WTC11 (cell line): ENCODE measurements at regions of chr11 and their contacts with region 1.

Region 1: DNA sequence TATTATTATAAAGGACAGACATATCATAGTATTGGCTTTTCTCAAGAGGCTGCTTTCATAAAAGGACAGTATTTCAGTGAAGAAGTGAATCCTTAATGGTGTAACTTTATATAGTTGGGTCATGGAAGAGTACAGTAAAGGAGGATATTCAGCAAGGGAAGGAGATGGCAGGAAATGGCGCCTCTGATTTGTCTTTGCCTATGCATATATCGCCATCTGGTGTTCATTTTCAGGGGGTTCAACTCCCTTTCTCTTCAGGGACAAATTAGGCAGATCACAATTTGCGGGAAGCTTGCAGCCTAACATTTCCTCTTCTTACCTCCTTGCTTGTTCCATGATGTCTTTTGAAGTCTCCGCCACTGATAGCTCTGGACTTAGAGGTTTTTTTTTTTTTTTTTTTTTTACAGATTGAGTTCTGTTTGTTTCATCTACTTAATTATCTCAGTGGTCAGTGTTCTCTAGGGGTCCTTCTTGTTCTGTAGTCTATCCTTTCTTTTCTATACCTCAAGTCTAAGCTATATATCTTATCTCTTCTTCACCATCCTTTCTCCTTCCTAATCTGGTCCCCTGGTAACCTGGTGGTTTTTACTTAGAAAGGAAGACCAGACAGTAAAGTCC is 21.8 kb upstream of the RRM1 start:
- DNase-seq: no peak
- ATAC-seq: peak; percentile 90
- H3K4me3 Mint-ChIP-seq: no peak overlapping the region
- H3K27ac Mint-ChIP-seq: no peak overlapping the region
- H3K4me1 Mint-ChIP-seq: no peaks in the 10 kb centered on the region
- H3K27me3 Mint-ChIP-seq: peaks cover 8% of the 10 kb centered on the region; the same call in 1 of the 2 replicates
- CTCF ChIP-seq: peak; percentile 73

Region 2: GRCh38 chr11:3824714-3825472 is 247.9 kb before region 1 on chr11:
- CTCF ChIA-PET with region 1: interaction called, 19 read pairs
- POLR2A ChIA-PET with region 1: no interaction called
- DNase-seq: peak; percentile 94
- ATAC-seq: peak; percentile 92
- H3K4me3 Mint-ChIP-seq: no peak overlapping the region
- H3K27ac Mint-ChIP-seq: peak overlapping the region; percentile 26
- H3K4me1 Mint-ChIP-seq: peaks cover 41% of the 10 kb centered on the region
- H3K27me3 Mint-ChIP-seq: no peaks in the 10 kb centered on the region
- CTCF ChIP-seq: peak; percentile 87

Region 3: DNA sequence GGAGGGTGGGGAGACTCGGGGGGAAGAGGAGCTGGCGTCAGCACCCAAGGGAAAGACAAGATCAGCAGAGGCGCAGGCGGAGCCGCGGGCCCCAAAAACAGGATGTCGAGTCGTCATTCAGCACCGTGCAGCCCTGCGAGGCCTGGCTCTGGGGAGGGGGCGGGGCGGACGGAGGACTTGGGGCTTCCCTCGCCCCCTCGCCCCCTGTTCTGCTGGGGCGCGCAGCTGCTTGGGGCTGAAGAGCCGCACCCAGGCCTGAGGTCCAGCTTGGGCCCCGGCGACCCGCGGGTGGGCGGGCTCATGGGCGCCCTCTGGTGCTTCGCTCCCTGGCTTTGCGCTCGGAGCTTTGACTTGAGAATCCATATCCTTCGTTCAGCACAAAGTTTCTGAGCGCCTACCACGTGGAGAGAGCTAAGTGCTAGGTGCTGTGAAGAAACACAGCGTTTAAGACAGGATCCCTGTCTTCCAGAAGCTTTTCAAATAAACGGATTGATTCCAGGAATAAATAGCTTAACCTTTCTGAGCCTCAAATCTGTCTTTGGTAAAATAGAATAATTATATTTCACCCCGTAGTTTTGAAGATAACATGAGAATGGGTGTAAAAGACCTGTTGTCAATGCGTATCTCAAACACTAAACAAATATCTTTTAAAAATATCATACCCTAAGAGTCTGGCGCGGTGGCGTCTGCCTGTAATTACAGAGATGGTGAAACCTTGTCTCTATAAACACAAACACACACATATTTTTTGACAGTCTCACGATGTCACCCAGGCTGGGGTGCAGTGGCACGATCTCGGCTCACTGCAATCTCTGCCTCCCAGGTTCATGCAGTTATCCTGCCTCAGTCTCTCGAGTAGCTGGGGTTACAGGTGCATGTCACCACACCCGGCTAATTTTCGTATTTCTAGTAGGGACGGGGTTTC is 231.1 kb before region 1 on chr11:
- CTCF ChIA-PET with region 1: interaction called, 33 read pairs
- POLR2A ChIA-PET with region 1: interaction called, 3 read pairs
- DNase-seq: peak; percentile 84
- ATAC-seq: peak; percentile 66
- H3K4me3 Mint-ChIP-seq: peak overlapping the region; percentile 72
- H3K27ac Mint-ChIP-seq: no peak overlapping the region
- H3K4me1 Mint-ChIP-seq: peaks cover 36% of the 10 kb centered on the region
- H3K27me3 Mint-ChIP-seq: peaks cover 9% of the 10 kb centered on the region
- CTCF ChIP-seq: peak; percentile 58

Region 4: DNA sequence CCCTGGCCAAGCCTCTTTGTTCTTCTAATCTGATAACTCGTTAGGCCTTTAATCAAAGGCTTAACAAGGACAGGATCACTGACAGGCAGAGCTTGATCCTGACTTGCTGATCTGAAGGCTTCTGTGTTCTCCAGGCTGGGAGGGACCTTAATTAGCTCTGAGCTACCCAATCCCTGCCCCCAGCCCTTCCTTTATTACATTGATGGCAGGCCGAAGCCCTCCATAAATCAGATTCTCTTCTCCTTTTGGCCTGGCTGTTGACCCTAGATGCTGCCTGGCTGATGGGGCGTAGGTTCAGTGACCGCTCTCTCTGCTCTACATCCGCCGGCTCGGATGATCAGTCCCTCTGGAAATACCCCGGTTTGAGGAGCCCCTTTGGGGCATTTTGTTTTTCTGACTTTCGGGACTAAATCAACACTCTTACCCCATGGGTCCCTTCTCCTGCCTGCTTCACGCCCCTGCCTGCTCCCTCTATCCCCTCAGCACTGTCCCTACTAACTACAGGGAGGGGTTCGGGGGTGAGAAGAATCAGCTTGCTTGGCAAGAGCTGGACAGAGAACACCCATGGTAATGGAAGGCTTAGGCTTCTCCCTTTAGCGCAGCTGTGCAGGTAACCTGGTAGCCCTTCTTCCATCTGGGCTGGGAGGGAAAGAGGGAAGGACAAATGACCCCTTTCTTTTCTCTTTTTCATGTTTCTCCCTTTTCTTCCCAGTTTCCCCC is 11.8 kb after region 1 on chr11:
- CTCF ChIA-PET with region 1: interaction called, 19 read pairs
- POLR2A ChIA-PET with region 1: no interaction called
- DNase-seq: no peak
- ATAC-seq: no peak
- H3K4me3 Mint-ChIP-seq: no peak overlapping the region
- H3K27ac Mint-ChIP-seq: no peak overlapping the region
- H3K4me1 Mint-ChIP-seq: peaks cover 12% of the 10 kb centered on the region
- H3K27me3 Mint-ChIP-seq: no peaks in the 10 kb centered on the region
- CTCF ChIP-seq: no peak